Naive thymus-derived CD4-positive, alpha-beta T cell (primary cell): ENCODE measurements at regions of chr1 and their contacts with region 1.

Region 1: GRCh38 chr1:159780583-159781582 is at the start of gene DUSP23:
- DNase-seq: peak; percentile 88 to 96 (median 96)
- ATAC-seq: peak; percentile 97
- H3K4me3 ChIP-seq: peak within 1 kb of the TSS; percentile 69
- H3K4me3 Mint-ChIP-seq: peak within 1 kb of the TSS; percentile 78 to 93 (median 84)
- H3K27ac ChIP-seq: peak within 1 kb of the TSS; percentile 66
- H3K27ac Mint-ChIP-seq: peak within 1 kb of the TSS; percentile 2 to 94 (median 85)
- H3K4me1 ChIP-seq: peaks cover 6% of the 10 kb centered on the region in 2 donors
- H3K4me1 Mint-ChIP-seq: peaks cover 9 to 33% (median 28%) of the 10 kb centered on the region in 7 donors
- H3K27me3 ChIP-seq: no peaks in the 10 kb centered on the region
- H3K27me3 Mint-ChIP-seq: peaks cover 0 to 11% (median 0%) of the 10 kb centered on the region in 5 donors
- total RNA-seq, gene DUSP23: 7.4 to 18.9 (median 12.2) TPM

Region 2: DNA sequence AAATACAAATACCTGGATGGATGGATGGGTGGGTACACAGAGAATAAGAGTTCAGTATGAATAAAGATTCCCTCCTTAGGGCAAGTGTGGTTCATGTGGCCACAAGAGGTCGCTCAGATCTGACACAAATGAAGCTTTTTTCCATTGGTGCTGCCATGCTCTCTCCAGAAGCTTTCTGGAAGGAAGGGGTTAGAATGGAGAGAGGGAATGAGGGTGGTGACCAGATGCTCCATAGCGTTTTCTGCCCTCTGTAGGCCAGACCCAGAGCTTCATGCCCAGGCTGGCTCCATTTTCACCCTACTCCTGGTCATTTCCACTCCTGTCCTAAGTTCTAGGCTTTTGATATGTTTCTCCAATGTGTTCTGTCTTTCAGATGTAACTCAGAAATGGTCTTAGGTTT is 18.0 kb after region 1 on chr1:
- CTCF ChIA-PET with region 1: interaction called, 8 read pairs
- POLR2A ChIA-PET with region 1: no interaction called
- intact Hi-C with region 1: loop called (anchors 1 to 2 kb)
- DNase-seq: peak in 8 of 9 donors; percentile 11 to 52 (median 34)
- ATAC-seq: peak; percentile 66
- H3K4me3 ChIP-seq: no peak overlapping the region
- H3K4me3 Mint-ChIP-seq: no peak overlapping the region
- H3K27ac ChIP-seq: no peak overlapping the region
- H3K27ac Mint-ChIP-seq: no peak overlapping the region
- H3K4me1 ChIP-seq: peaks cover 8 to 48% of the 10 kb centered on the region in 2 donors
- H3K4me1 Mint-ChIP-seq: peaks cover 13 to 24% (median 16%) of the 10 kb centered on the region in 7 donors
- H3K27me3 ChIP-seq: no peaks in the 10 kb centered on the region
- H3K27me3 Mint-ChIP-seq: peaks cover 0 to 55% (median 3%) of the 10 kb centered on the region in 5 donors

Region 3: GRCh38 chr1:159817276-159818041 is 36.6 kb after region 1 on chr1:
- CTCF ChIA-PET with region 1: no interaction called
- POLR2A ChIA-PET with region 1: no interaction called
- intact Hi-C with region 1: no loop called
- DNase-seq: no peak
- ATAC-seq: no peak
- H3K4me3 ChIP-seq: no peak overlapping the region
- H3K4me3 Mint-ChIP-seq: no peak overlapping the region
- H3K27ac ChIP-seq: no peak overlapping the region
- H3K27ac Mint-ChIP-seq: no peak overlapping the region
- H3K4me1 ChIP-seq: no peaks in the 10 kb centered on the region
- H3K4me1 Mint-ChIP-seq: peaks cover 0 to 5% (median 0%) of the 10 kb centered on the region in 7 donors
- H3K27me3 ChIP-seq: no peaks in the 10 kb centered on the region
- H3K27me3 Mint-ChIP-seq: peaks cover 0 to 39% (median 0%) of the 10 kb centered on the region in 5 donors

Region 4: DNA sequence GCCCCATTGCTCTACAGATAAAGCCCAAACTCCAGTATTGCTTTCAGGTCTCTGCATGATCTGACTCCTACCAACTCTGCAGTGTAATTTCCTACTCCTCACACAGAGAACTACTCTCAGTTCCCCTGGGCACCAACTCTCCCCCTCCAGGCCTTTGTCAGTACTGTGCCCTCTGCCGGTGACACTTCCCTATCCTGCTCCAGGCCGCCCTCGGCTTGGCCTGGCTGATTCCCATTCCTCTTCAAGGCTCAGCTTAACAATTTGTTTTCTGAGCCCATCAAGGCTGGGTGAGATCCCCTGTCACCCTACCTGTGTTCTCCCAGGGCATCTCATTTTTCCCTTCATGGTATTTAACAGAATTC is 48.4 kb after region 1 on chr1:
- CTCF ChIA-PET with region 1: no interaction called
- POLR2A ChIA-PET with region 1: interaction called, 3 read pairs
- intact Hi-C with region 1: loop called in 1 of 2 experiments (anchors 5 kb)
- DNase-seq: no peak
- ATAC-seq: peak; percentile 79
- H3K4me3 ChIP-seq: no peak overlapping the region
- H3K4me3 Mint-ChIP-seq: peak overlapping the region in 4 of 10 donors; percentile 9 to 78 (median 44)
- H3K27ac ChIP-seq: no peak overlapping the region
- H3K27ac Mint-ChIP-seq: peak overlapping the region in 3 of 9 donors; percentile 3 to 32 (median 9)
- H3K4me1 ChIP-seq: peaks cover 31 to 45% of the 10 kb centered on the region in 2 donors
- H3K4me1 Mint-ChIP-seq: peaks cover 44 to 57% (median 48%) of the 10 kb centered on the region in 7 donors
- H3K27me3 ChIP-seq: no peaks in the 10 kb centered on the region
- H3K27me3 Mint-ChIP-seq: peaks cover 0 to 39% (median 0%) of the 10 kb centered on the region in 5 donors

Region 5: GRCh38 chr1:159854693-159855192 is 73.9 kb after region 1 on chr1:
- CTCF ChIA-PET with region 1: no interaction called
- POLR2A ChIA-PET with region 1: no interaction called
- intact Hi-C with region 1: loop called in 1 of 2 experiments (anchors 1 kb)
- DNase-seq: peak; percentile 53 to 72 (median 70)
- ATAC-seq: peak; percentile 91
- H3K4me3 ChIP-seq: peak overlapping the region; percentile 69
- H3K4me3 Mint-ChIP-seq: peak overlapping the region; percentile 80 to 96 (median 91)
- H3K27ac ChIP-seq: peak overlapping the region; percentile 75
- H3K27ac Mint-ChIP-seq: peak overlapping the region in 8 of 9 donors; percentile 67 to 94 (median 88)
- H3K4me1 ChIP-seq: peaks cover 0 to 3% of the 10 kb centered on the region in 2 donors
- H3K4me1 Mint-ChIP-seq: peaks cover 14 to 37% (median 23%) of the 10 kb centered on the region in 7 donors
- H3K27me3 ChIP-seq: no peaks in the 10 kb centered on the region
- H3K27me3 Mint-ChIP-seq: peaks cover 0 to 32% (median 0%) of the 10 kb centered on the region in 5 donors

Region 6: DNA sequence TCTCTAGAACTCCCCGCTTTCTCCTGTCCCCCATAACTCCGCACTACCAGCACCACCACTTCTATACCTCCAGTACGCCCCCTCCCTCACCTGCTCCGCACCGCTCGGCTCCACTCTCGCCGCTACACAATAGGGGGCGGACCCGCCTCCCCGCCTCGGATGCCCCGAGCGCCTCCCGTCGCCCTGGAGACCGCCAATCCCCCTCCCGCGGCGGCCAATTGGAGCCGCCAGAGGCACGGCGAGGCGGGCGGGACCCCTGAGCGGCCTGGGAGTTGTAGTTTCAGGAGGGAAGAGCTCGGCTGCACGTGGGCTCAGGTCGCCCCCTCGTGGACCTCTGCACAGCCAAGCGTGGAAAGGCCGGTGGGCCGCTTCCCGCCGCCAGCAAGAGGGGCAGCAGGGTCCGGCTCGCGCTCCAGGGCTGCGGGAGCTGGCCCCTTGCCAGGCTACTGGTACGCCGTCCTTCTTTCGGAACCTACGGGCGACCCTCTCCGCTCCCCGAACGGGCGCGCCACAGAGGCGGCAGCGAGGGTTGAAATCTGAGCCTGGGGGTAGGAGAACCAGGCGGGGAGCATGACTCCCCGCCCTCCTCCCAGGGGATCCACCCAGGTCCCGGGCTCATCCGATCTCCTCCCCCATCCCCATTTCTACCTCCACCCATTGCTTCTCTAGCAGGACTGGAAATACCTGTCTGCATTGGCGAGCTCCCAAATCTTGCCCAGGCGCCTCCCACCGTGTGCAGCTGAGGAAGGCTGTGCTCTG is 164.8 kb after region 1 on chr1 and contains the start of gene IGSF9:
- CTCF ChIA-PET with region 1: no interaction called
- POLR2A ChIA-PET with region 1: no interaction called
- intact Hi-C with region 1: loop called in 1 of 2 experiments (anchors 1 kb)
- DNase-seq: peak in 8 of 9 donors; percentile 60 to 84 (median 76)
- ATAC-seq: peak; percentile 95
- H3K4me3 ChIP-seq: peak within 1 kb of the TSS; percentile 57
- H3K4me3 Mint-ChIP-seq: peak within 1 kb of the TSS; percentile 50 to 79 (median 72)
- H3K27ac ChIP-seq: no peak within 1 kb of the TSS
- H3K27ac Mint-ChIP-seq: peak within 1 kb of the TSS in 3 of 9 donors; percentile 9 to 69 (median 17)
- H3K4me1 ChIP-seq: peaks cover 4 to 7% of the 10 kb centered on the region in 2 donors
- H3K4me1 Mint-ChIP-seq: peaks cover 8 to 18% (median 14%) of the 10 kb centered on the region in 7 donors
- H3K27me3 ChIP-seq: peaks cover 8 to 11% of the 10 kb centered on the region in 2 donors
- H3K27me3 Mint-ChIP-seq: peaks cover 23 to 73% (median 30%) of the 10 kb centered on the region in 5 donors
- total RNA-seq, gene IGSF9: 0.12 TPM in 1 of 5 experiments, not detected in the others

Region 7: GRCh38 chr1:160006312-160006940 is 225.5 kb after region 1 on chr1:
- CTCF ChIA-PET with region 1: interaction called, 3 read pairs
- POLR2A ChIA-PET with region 1: no interaction called
- intact Hi-C with region 1: loop called (anchors 1 kb)
- DNase-seq: peak; percentile 38 to 67 (median 61)
- ATAC-seq: peak; percentile 88
- H3K4me3 ChIP-seq: no peak overlapping the region
- H3K4me3 Mint-ChIP-seq: no peak overlapping the region
- H3K27ac ChIP-seq: no peak overlapping the region
- H3K27ac Mint-ChIP-seq: no peak overlapping the region
- H3K4me1 ChIP-seq: no peaks in the 10 kb centered on the region
- H3K4me1 Mint-ChIP-seq: no peaks in the 10 kb centered on the region
- H3K27me3 ChIP-seq: no peaks in the 10 kb centered on the region
- H3K27me3 Mint-ChIP-seq: peaks cover 0 to 33% (median 6%) of the 10 kb centered on the region in 5 donors

Region 8: GRCh38 chr1:160031365-160032164 is 250.7 kb after region 1 on chr1 and contains the start of gene PIGM:
- CTCF ChIA-PET with region 1: no interaction called
- POLR2A ChIA-PET with region 1: interaction called, 4 read pairs
- intact Hi-C with region 1: loop called (anchors 1 kb)
- DNase-seq: peak; percentile 73 to 91 (median 90)
- ATAC-seq: peak; percentile 98
- H3K4me3 ChIP-seq: peak within 1 kb of the TSS; percentile 68
- H3K4me3 Mint-ChIP-seq: peak within 1 kb of the TSS; percentile 90 to 100 (median 98)
- H3K27ac ChIP-seq: peak within 1 kb of the TSS; percentile 69
- H3K27ac Mint-ChIP-seq: peak within 1 kb of the TSS; percentile 69 to 96 (median 89)
- H3K4me1 ChIP-seq: peaks cover 12 to 14% of the 10 kb centered on the region in 2 donors
- H3K4me1 Mint-ChIP-seq: peaks cover 30 to 56% (median 45%) of the 10 kb centered on the region in 7 donors
- H3K27me3 ChIP-seq: no peaks in the 10 kb centered on the region
- H3K27me3 Mint-ChIP-seq: peaks cover 0 to 18% (median 0%) of the 10 kb centered on the region in 5 donors
- total RNA-seq, gene PIGM: 4.0 to 11.4 (median 7.0) TPM